Astrocyte of the cerebellum (primary cell): ENCODE measurements at regions of chr11 and their contacts with region 1.

Region 1: GRCh38 chr11:67113231-67113721 is 5.8 kb upstream of the KDM2A start:
- DNase-seq: no peak
- H3K4me3 ChIP-seq: no peak overlapping the region
- CTCF ChIP-seq: no peak

Region 2: DNA sequence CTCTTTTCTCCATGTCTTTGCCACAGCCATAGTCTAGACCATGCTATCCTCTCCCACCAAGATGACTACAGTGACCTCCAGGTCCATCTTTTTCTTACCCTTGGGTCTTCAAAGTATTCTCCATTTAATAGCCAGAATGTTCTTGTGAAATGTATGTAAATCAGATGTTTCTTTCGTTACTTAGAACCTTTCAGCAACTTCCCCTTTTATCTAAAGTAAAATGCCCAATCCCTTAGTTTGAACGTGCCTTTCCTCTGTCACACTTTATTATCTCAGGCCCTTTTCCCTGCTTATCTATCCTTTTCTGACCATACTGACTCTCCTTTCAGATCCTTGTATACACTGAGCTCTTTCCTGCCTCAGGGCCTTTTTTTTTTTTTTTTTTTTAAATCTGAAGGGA is 453.5 kb before region 1 on chr11:
- in situ Hi-C with region 1: no loop called
- DNase-seq: no peak
- H3K4me3 ChIP-seq: no peak overlapping the region
- CTCF ChIP-seq: no peak

Region 3: DNA sequence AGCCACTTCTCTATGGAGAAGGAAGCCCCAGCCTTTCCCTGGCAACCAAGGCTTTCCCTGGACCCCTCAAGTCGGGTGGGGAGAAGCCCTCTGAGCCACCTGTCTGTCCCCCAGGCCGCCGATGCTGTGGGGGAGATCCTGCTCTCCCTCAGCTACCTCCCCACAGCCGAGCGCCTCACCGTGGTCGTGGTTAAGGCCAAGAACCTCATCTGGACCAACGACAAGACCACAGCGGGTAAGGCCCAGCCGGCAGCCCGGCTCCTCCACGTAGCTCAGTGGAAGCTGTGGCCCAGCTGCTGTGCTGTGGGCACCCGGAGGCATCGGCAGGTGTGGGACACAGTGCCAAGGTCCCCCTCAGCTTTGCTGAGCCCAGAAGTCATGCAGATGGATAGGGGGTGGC is 68.8 kb before region 1 on chr11:
- in situ Hi-C with region 1: loop called (anchors 5 kb)
- DNase-seq: no peak
- H3K4me3 ChIP-seq: no peak overlapping the region
- CTCF ChIP-seq: peak; percentile 18

Region 4: DNA sequence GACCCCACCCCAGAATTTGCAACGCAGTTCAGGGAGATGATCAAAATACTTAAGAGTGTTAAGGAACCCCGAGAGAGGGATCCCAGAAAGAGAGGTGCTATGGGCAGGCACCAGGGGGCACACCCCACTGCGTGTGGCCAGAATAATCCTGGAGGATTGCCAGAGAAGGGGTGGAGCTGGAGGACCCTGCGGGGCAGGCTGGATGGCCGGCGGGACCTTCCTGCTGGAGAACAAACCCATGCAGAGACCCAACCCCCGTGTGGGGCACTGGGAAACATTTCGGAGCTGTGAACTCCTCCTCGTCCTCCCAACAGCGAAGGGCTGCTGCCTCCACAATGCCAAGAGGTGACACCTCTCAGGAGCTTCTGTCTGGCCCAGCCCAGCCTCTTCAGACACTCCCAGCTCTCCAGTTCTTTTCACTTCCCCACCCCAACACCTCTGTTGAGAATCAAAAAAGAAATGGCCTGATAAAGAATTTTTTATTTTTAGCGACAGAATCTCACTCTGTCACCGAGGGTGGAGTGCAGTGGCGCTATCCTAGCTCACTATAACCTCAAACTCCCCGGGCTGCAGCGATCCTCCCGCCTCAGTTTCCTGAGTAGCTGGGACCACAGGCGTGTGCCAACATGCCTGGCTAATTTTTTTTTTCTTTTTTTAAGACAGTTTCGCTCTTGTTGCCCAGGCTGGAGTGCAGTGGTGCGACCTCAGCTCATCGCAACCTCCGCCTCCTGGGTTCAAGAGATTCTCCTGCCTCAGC is 31.1 kb before region 1 on chr11:
- in situ Hi-C with region 1: no loop called
- DNase-seq: no peak
- H3K4me3 ChIP-seq: no peak overlapping the region
- CTCF ChIP-seq: no peak

Region 5: GRCh38 chr11:67178878-67179277 is 65.6 kb after region 1 on chr11:
- in situ Hi-C with region 1: loop called (anchors 5 kb)
- DNase-seq: no peak
- H3K4me3 ChIP-seq: no peak overlapping the region
- CTCF ChIP-seq: no peak